Lower leg skin (tissue), 4 donors: ENCODE measurements at regions of chr5 and their contacts with region 1.

Region 1: GRCh38 chr5:69245031-69245430 is 10.3 kb downstream of the CDK7 start:
- DNase-seq: no peak
- H3K4me3 ChIP-seq: no peak overlapping the region
- CTCF ChIP-seq: no peak
- POLR2A ChIP-seq: no peak

Region 2: DNA sequence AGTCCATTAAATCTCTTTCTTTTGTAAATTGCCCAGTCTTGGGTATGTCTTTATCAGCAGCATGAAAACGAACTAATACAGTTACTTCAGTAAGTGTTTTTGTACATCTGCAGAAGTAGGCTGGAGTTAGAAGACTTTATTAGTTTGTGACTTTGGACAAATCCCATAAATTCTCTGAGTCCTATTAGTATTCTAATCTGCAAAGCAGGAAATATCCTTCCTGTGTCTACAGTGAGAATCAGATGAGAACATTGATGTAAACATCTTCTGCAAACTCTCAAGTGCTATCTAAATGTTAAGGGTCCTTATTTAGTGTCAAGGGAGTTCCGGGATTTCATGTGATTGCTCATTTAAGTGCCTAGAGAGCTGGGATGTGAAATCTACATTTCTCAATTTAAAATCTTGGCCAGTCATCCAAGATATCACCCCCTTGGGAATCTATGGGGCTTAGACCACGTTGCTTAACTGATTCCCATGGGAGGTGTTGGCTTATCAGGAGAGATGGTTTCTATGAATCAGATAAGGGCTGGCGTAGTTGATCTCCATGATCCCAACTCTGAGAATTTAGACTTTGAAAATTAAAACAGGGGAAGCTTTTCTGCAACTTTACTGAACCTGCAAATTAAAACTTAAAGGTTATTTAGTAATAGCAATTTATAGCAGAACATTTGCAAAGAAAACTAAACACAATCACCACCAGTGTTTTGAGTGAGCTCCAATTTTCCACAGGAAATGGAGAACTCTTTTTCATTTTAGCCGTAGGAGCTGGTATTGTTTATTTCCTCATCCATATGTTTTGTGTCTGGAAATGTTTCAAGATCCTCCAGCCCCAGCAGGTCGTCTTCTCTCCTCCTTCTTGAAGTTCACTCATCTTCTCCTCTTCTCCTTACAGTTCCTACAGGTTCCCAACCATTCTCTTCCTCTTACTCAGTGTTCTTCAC is 1806.9 kb before region 1 on chr5:
- intact Hi-C with region 1: no loop called
- DNase-seq: no peak
- H3K4me3 ChIP-seq: no peak overlapping the region
- CTCF ChIP-seq: no peak
- POLR2A ChIP-seq: no peak

Region 3: DNA sequence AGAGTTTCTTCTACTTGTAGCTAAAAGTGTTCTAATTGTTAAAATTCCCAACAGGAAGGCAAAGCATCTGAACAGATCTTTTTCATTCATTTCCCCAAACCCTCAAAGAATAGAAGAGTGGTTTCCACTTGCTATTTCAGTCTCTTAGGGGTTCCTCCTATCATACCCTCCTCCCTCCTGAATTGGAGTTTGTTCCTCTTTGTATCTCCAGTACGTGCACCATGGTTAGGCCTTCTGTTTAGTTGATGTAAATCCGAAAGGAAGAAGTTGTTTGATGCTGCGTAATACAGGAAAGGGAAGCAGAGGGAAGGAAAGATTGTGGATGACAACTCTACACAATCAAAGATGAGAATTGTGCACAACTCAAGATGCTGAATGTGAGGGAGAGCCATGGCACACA is 725.9 kb before region 1 on chr5:
- intact Hi-C with region 1: no loop called
- DNase-seq: no peak
- H3K4me3 ChIP-seq: no peak overlapping the region
- CTCF ChIP-seq: no peak
- POLR2A ChIP-seq: no peak

Region 4: GRCh38 chr5:69285448-69286116 is 40.6 kb after region 1 on chr5:
- intact Hi-C with region 1: loop called (anchors 2 kb)
- DNase-seq: no peak
- H3K4me3 ChIP-seq: no peak overlapping the region
- CTCF ChIP-seq: no peak
- POLR2A ChIP-seq: no peak

Region 5: DNA sequence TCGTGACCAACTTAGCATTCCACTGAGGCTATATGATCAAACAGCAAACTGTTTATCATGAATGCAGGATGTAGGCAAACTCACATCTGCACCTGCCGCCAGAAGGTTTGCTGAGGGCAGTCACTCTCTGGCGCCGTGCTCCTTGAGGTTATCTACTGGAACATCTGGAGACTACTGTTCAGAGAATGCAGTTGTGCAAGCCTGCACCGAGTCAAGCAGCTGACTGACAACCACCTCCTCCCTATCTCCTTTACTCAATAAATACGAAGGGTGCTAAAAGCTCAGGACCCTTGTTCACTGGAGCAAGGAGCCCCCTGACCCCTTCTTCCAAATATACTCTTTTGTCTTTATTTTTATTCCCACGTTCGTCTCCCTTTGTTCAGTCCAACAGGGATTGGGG is 60.5 kb after region 1 on chr5:
- intact Hi-C with region 1: no loop called
- DNase-seq: no peak
- H3K4me3 ChIP-seq: no peak overlapping the region
- CTCF ChIP-seq: no peak
- POLR2A ChIP-seq: no peak

Region 6: DNA sequence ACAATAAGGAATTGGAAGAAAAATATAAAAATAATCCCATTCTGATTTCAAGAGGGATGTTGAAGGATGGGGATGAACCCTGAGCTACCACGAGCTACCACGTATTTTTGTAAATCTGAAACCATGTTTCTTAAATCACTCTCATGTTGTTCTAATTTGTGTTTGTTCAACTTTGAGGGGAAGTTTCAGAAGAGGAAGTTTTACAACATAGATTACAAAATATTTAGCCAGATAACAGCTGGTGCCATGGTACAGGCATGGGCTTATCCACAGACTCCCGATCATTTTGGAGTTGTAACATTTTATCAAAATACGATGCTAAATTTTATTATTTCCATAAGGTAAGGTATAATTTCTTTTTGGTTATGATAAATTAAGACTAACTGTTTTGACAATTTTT is 72.4 kb after region 1 on chr5:
- intact Hi-C with region 1: no loop called
- DNase-seq: no peak
- H3K4me3 ChIP-seq: no peak overlapping the region
- CTCF ChIP-seq: no peak
- POLR2A ChIP-seq: no peak